ENCODE measurements at regions of chr6 and their contacts with region 1.

Region 1: DNA sequence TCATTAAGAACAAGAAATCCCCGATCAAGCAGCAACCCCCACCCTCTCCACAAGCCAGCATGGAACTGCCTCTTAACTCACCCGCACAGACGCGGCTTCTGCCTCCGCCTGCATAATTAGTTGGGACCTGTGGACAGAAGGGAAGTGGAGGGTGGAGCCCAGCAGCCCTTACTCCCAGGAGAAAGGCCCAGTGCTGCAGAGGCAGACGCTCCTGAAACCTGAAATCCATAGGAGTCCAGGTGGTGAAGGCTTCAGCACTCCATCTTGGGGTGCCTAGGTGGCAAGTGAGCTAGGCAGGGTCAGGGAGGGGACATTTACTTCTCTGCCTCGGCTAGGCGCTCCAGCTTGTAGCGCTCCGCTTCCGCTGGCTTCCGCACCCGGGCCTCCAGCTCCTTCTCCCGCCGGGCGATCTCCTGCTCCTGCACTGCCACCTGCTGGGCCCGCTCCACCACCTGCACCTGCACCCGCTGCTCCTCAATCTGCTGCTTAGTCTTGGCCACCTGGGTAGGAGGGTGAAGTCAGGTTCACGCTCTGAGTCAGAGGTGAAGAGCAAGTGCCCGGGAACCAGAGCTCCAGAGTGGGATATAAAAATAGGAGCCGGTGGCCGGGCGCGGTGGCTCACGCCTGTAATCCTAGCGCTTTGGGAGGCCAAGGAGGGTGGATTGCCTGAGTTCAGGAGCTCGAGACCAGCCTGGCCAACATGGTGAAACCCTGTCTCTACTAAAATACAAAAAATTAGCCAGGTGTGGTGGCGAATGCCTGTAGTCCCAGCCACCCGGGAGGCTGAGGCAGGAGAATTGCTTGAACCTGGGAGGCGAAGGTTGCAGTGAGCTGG is 10.7 kb downstream of the TUBB start:
- DNase-seq: peak; percentile 87
- ATAC-seq: peak; percentile 90
- H3K4me3 Mint-ChIP-seq: peak overlapping the region; percentile 54
- H3K27ac Mint-ChIP-seq: peak overlapping the region; percentile 70
- H3K4me1 Mint-ChIP-seq: peaks cover 43% of the 10 kb centered on the region
- H3K27me3 Mint-ChIP-seq: no peaks in the 10 kb centered on the region

Region 2: GRCh38 chr6:28985462-28986164 is 1745.2 kb before region 1 on chr6:
- POLR2A ChIA-PET with region 1: no interaction called
- DNase-seq: no peak
- ATAC-seq: no peak
- H3K4me3 Mint-ChIP-seq: peak overlapping the region; percentile 80
- H3K27ac Mint-ChIP-seq: no peak overlapping the region
- H3K4me1 Mint-ChIP-seq: peaks cover 36% of the 10 kb centered on the region
- H3K27me3 Mint-ChIP-seq: peaks cover 30% of the 10 kb centered on the region

Region 3: GRCh38 chr6:30678964-30679726 is 51.7 kb before region 1 on chr6:
- POLR2A ChIA-PET with region 1: interaction called, 512 read pairs
- DNase-seq: peak; percentile 98
- ATAC-seq: peak; percentile 42
- H3K4me3 Mint-ChIP-seq: peak overlapping the region; percentile 91
- H3K27ac Mint-ChIP-seq: peak overlapping the region; percentile 99
- H3K4me1 Mint-ChIP-seq: peaks cover 24% of the 10 kb centered on the region
- H3K27me3 Mint-ChIP-seq: no peaks in the 10 kb centered on the region

Region 4: GRCh38 chr6:30686908-30687658 is 43.7 kb before region 1 on chr6:
- POLR2A ChIA-PET with region 1: interaction called, 512 read pairs
- DNase-seq: peak; percentile 83
- ATAC-seq: peak; percentile 18
- H3K4me3 Mint-ChIP-seq: peak overlapping the region; percentile 91
- H3K27ac Mint-ChIP-seq: peak overlapping the region; percentile 99
- H3K4me1 Mint-ChIP-seq: peaks cover 36% of the 10 kb centered on the region
- H3K27me3 Mint-ChIP-seq: no peaks in the 10 kb centered on the region

Region 5: DNA sequence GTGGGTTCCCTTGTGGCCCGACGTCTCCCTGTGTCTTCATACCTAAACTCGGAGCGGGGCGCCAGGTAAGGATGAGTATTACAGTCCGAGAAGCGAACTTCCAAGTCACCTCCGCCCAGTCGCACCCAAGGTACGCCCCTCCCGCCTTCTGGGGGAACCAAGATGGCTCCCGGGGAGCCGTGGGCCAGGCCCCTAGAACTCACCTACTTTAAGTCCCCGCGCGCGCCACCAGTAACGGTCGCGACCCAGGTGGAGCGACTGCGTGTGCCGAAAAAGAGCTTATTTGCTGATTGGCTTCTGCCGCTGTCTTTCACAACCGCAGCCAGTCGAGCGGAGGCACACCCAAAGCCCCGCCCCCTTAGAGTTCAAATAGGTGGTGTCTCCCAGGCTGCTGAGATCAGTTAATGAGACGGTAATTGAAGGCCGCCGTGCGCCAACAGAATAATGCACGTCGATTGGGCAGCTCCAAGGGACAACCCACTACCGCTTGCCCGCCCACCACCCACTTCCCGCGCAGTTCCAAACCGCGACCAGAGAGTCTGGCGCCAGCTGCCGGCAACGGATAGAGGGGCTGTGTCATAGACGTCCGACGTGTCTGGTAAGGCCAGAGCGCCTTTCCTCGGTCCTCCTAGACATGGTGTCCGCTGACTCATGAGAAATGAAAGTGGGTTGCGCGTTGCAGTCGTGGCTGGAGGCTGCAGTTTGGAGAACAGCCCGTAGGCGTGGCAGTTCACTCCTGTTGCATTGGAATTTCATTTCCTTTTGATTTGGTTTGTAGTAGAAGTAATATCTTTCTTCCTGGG is 13.6 kb before region 1 on chr6 and contains the start of gene MDC1:
- POLR2A ChIA-PET with region 1: interaction called, 15 read pairs
- DNase-seq: peak; percentile 97
- ATAC-seq: peak; percentile 77
- H3K4me3 Mint-ChIP-seq: peak within 1 kb of the TSS; percentile 91
- H3K27ac Mint-ChIP-seq: peak within 1 kb of the TSS; percentile 100
- H3K4me1 Mint-ChIP-seq: peaks cover 41% of the 10 kb centered on the region
- H3K27me3 Mint-ChIP-seq: no peaks in the 10 kb centered on the region
- total RNA-seq, gene MDC1: 50.2 to 52.2 TPM

Region 6: GRCh38 chr6:30742316-30743098 is 11.7 kb after region 1 on chr6 and contains the start of gene FLOT1:
- POLR2A ChIA-PET with region 1: interaction called, 25 read pairs
- DNase-seq: peak; percentile 98
- ATAC-seq: peak; percentile 82
- H3K4me3 Mint-ChIP-seq: peak within 1 kb of the TSS; percentile 98
- H3K27ac Mint-ChIP-seq: peak within 1 kb of the TSS; percentile 96
- H3K4me1 Mint-ChIP-seq: peaks cover 48% of the 10 kb centered on the region
- H3K27me3 Mint-ChIP-seq: no peaks in the 10 kb centered on the region
- total RNA-seq, gene FLOT1: 261 to 271 TPM

Region 7: GRCh38 chr6:30754631-30755030 is 23.8 kb after region 1 on chr6:
- POLR2A ChIA-PET with region 1: no interaction called
- DNase-seq: no peak
- ATAC-seq: no peak
- H3K4me3 Mint-ChIP-seq: no peak overlapping the region
- H3K27ac Mint-ChIP-seq: no peak overlapping the region
- H3K4me1 Mint-ChIP-seq: peaks cover 15% of the 10 kb centered on the region
- H3K27me3 Mint-ChIP-seq: no peaks in the 10 kb centered on the region

Region 8: DNA sequence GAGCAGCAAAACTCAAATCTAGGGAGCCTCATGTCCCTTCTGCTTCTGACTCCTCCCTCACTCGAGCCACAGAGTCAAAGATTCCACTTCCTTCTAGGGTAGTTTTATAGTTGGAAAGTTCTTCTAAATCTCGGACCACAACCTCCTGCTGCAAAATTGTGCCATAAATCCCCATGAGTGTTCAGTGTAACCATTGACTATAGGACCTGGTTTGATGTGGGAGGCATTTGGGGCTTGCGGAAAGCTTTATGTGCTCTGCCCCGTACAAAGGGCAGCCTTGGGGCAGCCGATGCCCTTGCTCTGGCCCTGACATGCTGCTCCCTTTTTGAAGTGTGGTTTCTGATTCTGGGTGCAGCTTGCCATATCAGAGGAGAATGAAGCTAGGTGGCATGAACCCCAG is 57.1 kb after region 1 on chr6:
- POLR2A ChIA-PET with region 1: interaction called, 12 read pairs
- DNase-seq: peak; percentile 55
- ATAC-seq: peak; percentile 66
- H3K4me3 Mint-ChIP-seq: peak overlapping the region; percentile 69
- H3K27ac Mint-ChIP-seq: peak overlapping the region; percentile 89
- H3K4me1 Mint-ChIP-seq: peaks cover 63% of the 10 kb centered on the region
- H3K27me3 Mint-ChIP-seq: no peaks in the 10 kb centered on the region

Region 9: DNA sequence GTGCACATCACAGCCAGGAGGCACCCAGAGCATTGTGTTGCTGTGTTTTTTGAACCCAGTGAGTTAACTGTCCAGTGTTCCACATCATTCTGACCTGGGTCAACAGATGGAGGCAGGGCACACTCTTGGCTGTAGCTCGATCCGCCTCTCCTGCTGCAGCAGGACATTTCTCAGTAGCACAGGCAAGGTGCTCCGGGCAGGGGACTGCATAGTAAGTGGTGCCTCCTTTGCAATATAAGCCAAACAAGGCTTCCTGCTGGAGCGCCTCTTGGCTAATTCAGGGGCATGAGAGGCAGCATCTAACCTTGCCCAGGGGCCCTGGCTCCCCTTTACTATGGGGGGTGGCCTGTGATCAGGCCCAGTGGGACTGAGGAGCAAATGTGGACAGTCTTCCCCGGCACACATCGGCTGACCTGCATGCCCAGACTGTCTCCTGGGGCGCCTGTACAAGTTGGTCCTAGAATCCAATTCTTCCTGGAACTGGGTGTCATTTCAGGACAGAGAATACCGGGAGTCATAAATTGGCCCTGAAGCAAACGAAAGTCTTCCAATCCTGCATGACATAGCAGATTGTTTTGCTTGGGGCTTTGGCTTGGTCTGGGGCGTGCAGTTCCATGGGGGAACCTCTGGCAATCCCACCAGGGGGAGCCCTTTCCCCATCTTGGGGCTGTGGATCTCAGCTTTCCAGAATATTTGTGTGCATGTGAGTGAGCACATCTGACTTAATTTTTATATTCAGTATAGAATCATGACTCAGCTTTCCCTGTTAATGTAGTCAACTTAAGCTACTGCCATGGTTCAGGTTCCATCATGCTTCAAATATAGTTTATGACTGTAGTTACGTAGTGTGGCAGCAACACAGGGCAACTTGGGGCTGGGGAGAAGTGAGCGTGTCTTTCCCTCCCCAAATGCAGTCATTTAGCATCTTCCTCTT is 97.5 kb after region 1 on chr6:
- POLR2A ChIA-PET with region 1: interaction called, 10 read pairs
- DNase-seq: peak; percentile 81
- ATAC-seq: peak; percentile 76
- H3K4me3 Mint-ChIP-seq: peak overlapping the region; percentile 87
- H3K27ac Mint-ChIP-seq: peak overlapping the region; percentile 72
- H3K4me1 Mint-ChIP-seq: peaks cover 53% of the 10 kb centered on the region
- H3K27me3 Mint-ChIP-seq: no peaks in the 10 kb centered on the region